ENCODE measurements at regions of chr1 and their contacts with region 1.

Region 1: DNA sequence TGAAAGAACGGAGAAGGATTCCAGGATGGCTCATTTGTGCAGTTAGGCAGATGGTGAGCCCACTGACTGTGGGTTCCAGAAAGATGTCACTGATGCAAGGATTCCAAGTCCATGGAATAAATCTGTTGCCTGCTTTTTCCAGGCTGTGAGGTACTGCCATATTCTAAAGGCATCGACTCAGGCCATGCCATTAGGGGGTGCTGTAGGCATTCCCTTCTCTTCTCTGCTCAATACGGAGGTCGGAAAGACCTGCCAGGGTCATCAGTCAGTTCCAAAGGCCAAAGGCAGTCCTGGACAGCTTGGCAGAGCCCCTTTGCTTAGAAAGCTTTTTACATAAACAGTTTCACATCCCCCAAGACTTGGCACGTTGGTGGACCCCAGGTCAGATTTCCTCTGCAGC is 31.7 kb upstream of the TMEM125 start:
- DNase-seq: peak; percentile 39 to 83
- ATAC-seq: peak; percentile 72 to 92 (median 82)
- H3K4me3 ChIP-seq: no peak overlapping the region
- H3K27ac ChIP-seq: peak overlapping the region in 6 of 10 donors; percentile 14 to 56 (median 40)
- H3K4me1 ChIP-seq: peaks cover 4 to 50% (median 24%) of the 10 kb centered on the region in 9 donors
- H3K27me3 ChIP-seq: no peaks in the 10 kb centered on the region
- CTCF ChIP-seq: peak; percentile 60 to 84 (median 76)

Region 2: GRCh38 chr1:43348809-43349583 is 110.9 kb after region 1 on chr1:
- intact Hi-C with region 1: loop called in 1 of 10 experiments (anchors 5 kb)
- DNase-seq: peak; percentile 87
- ATAC-seq: peak; percentile 84 to 95 (median 90)
- H3K4me3 ChIP-seq: peak overlapping the region; percentile 8 to 67 (median 59)
- H3K27ac ChIP-seq: peak overlapping the region; percentile 85 to 98 (median 91)
- H3K4me1 ChIP-seq: peaks cover 4 to 57% (median 22%) of the 10 kb centered on the region in 9 donors
- H3K27me3 ChIP-seq: no peaks in the 10 kb centered on the region
- CTCF ChIP-seq: peak in 1 of 9 donors; percentile 11

Region 3: GRCh38 chr1:43367904-43368645 is 130.0 kb after region 1 on chr1 and contains the start of gene ELOVL1:
- intact Hi-C with region 1: loop called in 5 of 10 experiments (anchors 5 to 10 kb)
- DNase-seq: peak; percentile 94 to 95
- ATAC-seq: peak; percentile 94 to 97 (median 95)
- H3K4me3 ChIP-seq: peak within 1 kb of the TSS; percentile 64 to 96 (median 88)
- H3K27ac ChIP-seq: peak within 1 kb of the TSS; percentile 89 to 99 (median 98)
- H3K4me1 ChIP-seq: peaks cover 18 to 50% (median 32%) of the 10 kb centered on the region in 9 donors
- H3K27me3 ChIP-seq: no peaks in the 10 kb centered on the region
- CTCF ChIP-seq: peak in 5 of 9 donors; percentile 12 to 60 (median 48)
- total RNA-seq, gene ELOVL1: 18.4 to 49.3 (median 28.3) TPM

Region 4: GRCh38 chr1:43383449-43383848 is 145.4 kb after region 1 on chr1:
- intact Hi-C with region 1: loop called in 6 of 10 experiments (anchors 1 to 10 kb)
- DNase-seq: no peak
- ATAC-seq: peak; percentile 18 to 64 (median 48)
- H3K4me3 ChIP-seq: no peak overlapping the region
- H3K27ac ChIP-seq: no peak overlapping the region
- H3K4me1 ChIP-seq: peaks cover 3 to 35% (median 30%) of the 10 kb centered on the region in 9 donors
- H3K27me3 ChIP-seq: no peaks in the 10 kb centered on the region
- CTCF ChIP-seq: peak in 6 of 9 donors; percentile 26 to 51 (median 46)

Region 5: GRCh38 chr1:43405219-43405875 is 167.3 kb after region 1 on chr1:
- intact Hi-C with region 1: loop called in 1 of 10 experiments (anchors 5 kb)
- DNase-seq: no peak
- ATAC-seq: peak in 4 of 8 donors; percentile 16 to 53 (median 33)
- H3K4me3 ChIP-seq: no peak overlapping the region
- H3K27ac ChIP-seq: no peak overlapping the region
- H3K4me1 ChIP-seq: peaks cover 0 to 7% (median 0%) of the 10 kb centered on the region in 9 donors
- H3K27me3 ChIP-seq: no peaks in the 10 kb centered on the region
- CTCF ChIP-seq: no peak

Region 6: DNA sequence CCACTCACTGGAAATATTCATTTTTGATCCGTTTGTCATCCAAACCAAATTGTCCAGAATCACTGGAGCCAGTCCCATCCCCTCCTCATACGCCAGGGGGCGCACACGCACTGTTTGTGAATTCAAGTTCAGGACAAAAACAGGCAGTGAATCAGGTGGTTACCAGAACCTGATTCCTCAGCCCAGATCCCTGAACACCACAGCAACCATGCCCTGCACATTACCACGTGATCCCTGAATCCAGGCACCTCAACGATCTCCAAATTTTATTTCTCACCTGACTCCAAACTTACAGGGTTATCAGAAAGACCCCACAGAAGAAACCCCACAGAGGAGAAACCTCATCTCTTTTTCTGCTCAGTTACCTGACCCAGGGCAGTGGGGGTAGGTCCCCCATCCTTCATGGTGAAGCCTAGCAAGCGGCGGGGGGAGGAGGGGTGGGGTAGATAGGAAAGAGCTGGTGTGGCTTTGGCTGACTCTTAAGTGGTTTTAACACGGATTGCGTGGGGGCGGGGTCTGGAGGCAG is 291.2 kb after region 1 on chr1:
- intact Hi-C with region 1: loop called in 1 of 10 experiments (anchors 10 kb)
- DNase-seq: peak; percentile 80 to 82
- ATAC-seq: peak; percentile 41 to 85 (median 74)
- H3K4me3 ChIP-seq: no peak overlapping the region
- H3K27ac ChIP-seq: no peak overlapping the region
- H3K4me1 ChIP-seq: peaks cover 0 to 20% (median 11%) of the 10 kb centered on the region in 9 donors
- H3K27me3 ChIP-seq: peaks cover 0 to 38% (median 9%) of the 10 kb centered on the region in 7 donors
- CTCF ChIP-seq: peak; percentile 87 to 96 (median 94)